ENCODE measurements at regions of chr12 and their contacts with region 1.

Region 1: GRCh38 chr12:111428728-111429175 is 23.0 kb downstream of the SH2B3 start:
- DNase-seq: no peak
- H3K4me3 ChIP-seq: no peak overlapping the region
- H3K27ac ChIP-seq: no peak overlapping the region
- H3K4me1 ChIP-seq: peaks cover 4 to 33% (median 20%) of the 10 kb centered on the region in 4 experiments
- H3K27me3 ChIP-seq: no peaks in the 10 kb centered on the region; a peak in 1 of 7 replicates
- CTCF ChIP-seq: no peak
- EP300 ChIP-seq: no peak
- POLR2A ChIP-seq: no peak
- RAD21 ChIP-seq: no peak

Region 2: GRCh38 chr12:110998165-110998564 is 430.6 kb before region 1 on chr12:
- CTCF ChIA-PET with region 1: no interaction called
- POLR2A ChIA-PET with region 1: no interaction called
- DNase-seq: no peak
- H3K4me3 ChIP-seq: no peak overlapping the region
- H3K27ac ChIP-seq: no peak overlapping the region
- H3K4me1 ChIP-seq: no peaks in the 10 kb centered on the region
- H3K27me3 ChIP-seq: no peaks in the 10 kb centered on the region
- CTCF ChIP-seq: no peak
- EP300 ChIP-seq: no peak
- POLR2A ChIP-seq: no peak
- RAD21 ChIP-seq: no peak

Region 3: DNA sequence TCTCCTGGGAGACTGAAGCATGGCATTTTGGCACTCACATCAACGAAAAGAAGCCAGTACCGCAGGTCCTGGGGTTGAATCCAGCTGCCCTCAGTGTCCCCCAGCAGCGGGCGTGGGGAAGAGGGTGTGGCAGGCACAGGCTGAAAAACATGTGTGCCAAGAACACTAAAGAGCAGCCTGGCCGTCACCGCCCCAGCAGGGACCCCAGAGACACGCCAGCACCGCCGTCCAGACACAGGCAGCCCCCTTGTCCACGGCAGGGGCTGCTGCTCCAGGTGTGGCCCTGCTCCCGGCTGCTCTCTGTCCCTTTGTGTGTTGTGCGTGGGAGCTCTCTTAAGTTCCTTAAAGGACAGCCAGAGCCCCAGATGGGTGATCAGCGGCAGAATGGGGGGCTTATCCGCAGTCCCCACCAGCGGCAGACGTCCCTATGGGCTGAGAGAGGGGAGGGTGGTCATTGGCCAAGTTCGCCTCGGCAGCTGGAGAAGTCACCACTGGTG is 60.4 kb before region 1 on chr12:
- CTCF ChIA-PET with region 1: no interaction called
- POLR2A ChIA-PET with region 1: no interaction called
- DNase-seq: no peak
- H3K4me3 ChIP-seq: peak overlapping the region; percentile 75 to 83 (median 80)
- H3K27ac ChIP-seq: no peak overlapping the region
- H3K4me1 ChIP-seq: peaks cover 0 to 9% (median 3%) of the 10 kb centered on the region in 4 experiments; a peak in 6 of 7 replicates
- H3K27me3 ChIP-seq: peaks cover 0 to 18% (median 7%) of the 10 kb centered on the region in 4 experiments; a peak in 4 of 7 replicates
- CTCF ChIP-seq: no peak
- EP300 ChIP-seq: no peak
- POLR2A ChIP-seq: no peak
- RAD21 ChIP-seq: no peak

Region 4: DNA sequence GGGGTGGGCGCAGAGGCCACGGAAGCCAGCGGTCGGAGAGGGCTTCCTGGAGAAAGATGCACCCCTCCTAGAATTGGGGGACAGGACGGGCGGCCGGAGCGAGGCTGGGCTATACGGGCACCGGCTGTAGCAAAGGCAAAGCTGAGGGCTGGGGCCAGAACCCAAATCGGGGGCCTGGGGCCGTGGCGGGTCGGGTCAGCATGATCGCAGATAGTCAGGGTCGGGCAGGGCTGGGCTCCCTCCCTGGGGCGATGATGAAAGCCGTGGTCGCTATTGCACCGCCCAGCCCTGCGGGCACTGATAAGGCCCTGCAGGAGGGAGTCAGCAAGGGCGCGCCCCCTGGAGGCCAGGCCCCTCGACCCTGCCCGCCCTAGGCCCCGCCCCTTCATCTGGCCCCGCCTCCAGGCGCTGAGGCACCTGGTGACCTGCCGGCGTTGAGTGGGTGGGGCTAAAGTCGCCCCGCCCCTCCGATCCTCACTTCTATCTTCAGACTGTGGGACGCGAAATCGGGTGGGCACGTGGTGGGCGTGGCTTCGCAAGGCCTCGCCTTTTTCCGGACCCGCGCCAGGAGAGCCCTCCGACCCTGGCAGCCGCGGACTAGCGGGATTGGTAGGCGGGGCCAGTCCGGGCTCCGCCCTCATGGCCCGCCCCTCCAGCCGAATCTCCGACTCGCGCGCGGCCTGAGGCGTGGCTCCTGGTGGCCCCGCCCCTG is 23.4 kb before region 1 on chr12:
- CTCF ChIA-PET with region 1: interaction called, 838 read pairs
- POLR2A ChIA-PET with region 1: interaction called, 29 read pairs
- DNase-seq: peak; percentile 100
- H3K4me3 ChIP-seq: peak overlapping the region; percentile 54 to 93 (median 75)
- H3K27ac ChIP-seq: peak overlapping the region; percentile 87
- H3K4me1 ChIP-seq: peaks cover 5 to 48% (median 31%) of the 10 kb centered on the region in 4 experiments
- H3K27me3 ChIP-seq: no peaks in the 10 kb centered on the region
- CTCF ChIP-seq: peak; percentile 63 to 67 (median 66)
- EP300 ChIP-seq: no peak
- POLR2A ChIP-seq: peak in 1 of 2 experiments; percentile 71; a peak in 2 of 3 replicates
- RAD21 ChIP-seq: peak in 1 of 2 experiments; percentile 14; a peak in 2 of 4 replicates

Region 5: GRCh38 chr12:111412007-111412829 is 16.5 kb before region 1 on chr12:
- CTCF ChIA-PET with region 1: interaction called, 838 read pairs
- POLR2A ChIA-PET with region 1: interaction called, 26 read pairs
- DNase-seq: no peak
- H3K4me3 ChIP-seq: no peak overlapping the region
- H3K27ac ChIP-seq: peak overlapping the region; percentile 63; the same call in 1 of the 2 replicates
- H3K4me1 ChIP-seq: peaks cover 31 to 61% (median 45%) of the 10 kb centered on the region in 4 experiments
- H3K27me3 ChIP-seq: no peaks in the 10 kb centered on the region
- CTCF ChIP-seq: no peak
- EP300 ChIP-seq: 0 out of 3 replicates have a peak, but pooled peaks of 1 of the 2 experiments have one; percentile 31
- POLR2A ChIP-seq: no peak
- RAD21 ChIP-seq: no peak

Region 6: GRCh38 chr12:111482462-111482861 is 53.7 kb after region 1 on chr12:
- CTCF ChIA-PET with region 1: interaction called, 10 read pairs
- POLR2A ChIA-PET with region 1: no interaction called
- DNase-seq: no peak
- H3K4me3 ChIP-seq: no peak overlapping the region
- H3K27ac ChIP-seq: no peak overlapping the region
- H3K4me1 ChIP-seq: no peaks in the 10 kb centered on the region
- H3K27me3 ChIP-seq: no peaks in the 10 kb centered on the region
- CTCF ChIP-seq: peak in 1 of 3 experiments; percentile 28; a peak in 1 of 4 replicates
- EP300 ChIP-seq: no peak
- POLR2A ChIP-seq: no peak
- RAD21 ChIP-seq: no peak

Measured in H1 (cell line).